ENCODE measurements at regions of chr10 and their contacts with region 1.

Region 1: DNA sequence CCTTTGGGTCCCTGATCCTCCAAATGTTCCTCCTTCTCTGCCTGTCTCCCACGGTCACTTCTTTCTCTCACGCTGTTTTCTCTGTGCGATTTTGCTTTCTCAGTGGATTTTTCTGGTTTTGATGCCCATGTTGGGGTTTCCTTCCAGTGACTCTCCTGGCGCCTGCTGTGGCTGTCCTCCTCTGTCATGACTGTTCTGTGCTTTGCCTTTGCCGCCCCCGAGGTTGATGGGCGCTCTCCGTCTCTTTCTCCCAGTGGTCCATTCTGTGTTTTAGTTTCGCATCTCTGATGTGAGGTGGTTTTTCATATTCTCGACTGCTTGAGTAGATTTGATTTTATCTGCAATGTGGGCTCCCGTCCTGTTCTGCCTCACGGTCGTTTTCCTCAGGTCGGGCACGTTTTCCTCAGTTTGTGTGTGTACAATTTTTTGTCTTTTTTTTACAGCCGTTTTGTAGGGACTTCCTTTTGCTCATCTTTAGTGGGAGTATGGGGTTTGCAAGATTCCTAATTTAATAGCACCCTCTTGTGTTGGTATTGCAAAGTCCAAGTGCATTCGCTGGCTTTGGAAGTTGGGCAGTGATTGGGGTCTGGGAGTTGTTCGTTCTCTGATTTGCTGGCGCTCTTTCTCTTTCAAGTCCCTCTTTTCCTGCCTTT is 100.0 kb downstream of the INPP5A start:
- DNase-seq: no peak
- H3K4me3 ChIP-seq: no peak overlapping the region
- H3K27ac ChIP-seq: peak overlapping the region in 1 of 2 donors; percentile 24
- H3K4me1 ChIP-seq: peaks cover 16% of the 10 kb centered on the region
- H3K27me3 ChIP-seq: no peaks in the 10 kb centered on the region
- CTCF ChIP-seq: peak; percentile 68 to 73 (median 72)
- POLR2A ChIP-seq: no peak

Region 2: GRCh38 chr10:132387764-132388210 is 249.8 kb before region 1 on chr10:
- intact Hi-C with region 1: loop called (anchors 10 kb)
- DNase-seq: peak; percentile 81
- H3K4me3 ChIP-seq: no peak overlapping the region
- H3K27ac ChIP-seq: peak overlapping the region in 1 of 2 donors; percentile 82
- H3K4me1 ChIP-seq: peaks cover 10% of the 10 kb centered on the region
- H3K27me3 ChIP-seq: no peaks in the 10 kb centered on the region
- CTCF ChIP-seq: peak; percentile 64 to 82 (median 81)
- POLR2A ChIP-seq: no peak

Region 3: GRCh38 chr10:132463333-132464252 is 174.0 kb before region 1 on chr10:
- intact Hi-C with region 1: loop called (anchors 2 kb)
- DNase-seq: no peak
- H3K4me3 ChIP-seq: no peak overlapping the region
- H3K27ac ChIP-seq: peak overlapping the region; percentile 69 to 94
- H3K4me1 ChIP-seq: peaks cover 71% of the 10 kb centered on the region
- H3K27me3 ChIP-seq: no peaks in the 10 kb centered on the region
- CTCF ChIP-seq: peak in 1 of 3 experiments; percentile 22
- POLR2A ChIP-seq: no peak

Region 4: GRCh38 chr10:132516771-132517725 is 120.6 kb before region 1 on chr10:
- intact Hi-C with region 1: loop called (anchors 5 kb)
- DNase-seq: peak; percentile 96
- H3K4me3 ChIP-seq: no peak overlapping the region
- H3K27ac ChIP-seq: peak overlapping the region; percentile 80 to 82
- H3K4me1 ChIP-seq: peaks cover 66% of the 10 kb centered on the region
- H3K27me3 ChIP-seq: no peaks in the 10 kb centered on the region
- CTCF ChIP-seq: no peak
- POLR2A ChIP-seq: no peak